ENCODE measurements at regions of chr15 and their contacts with region 1.

Region 1: DNA sequence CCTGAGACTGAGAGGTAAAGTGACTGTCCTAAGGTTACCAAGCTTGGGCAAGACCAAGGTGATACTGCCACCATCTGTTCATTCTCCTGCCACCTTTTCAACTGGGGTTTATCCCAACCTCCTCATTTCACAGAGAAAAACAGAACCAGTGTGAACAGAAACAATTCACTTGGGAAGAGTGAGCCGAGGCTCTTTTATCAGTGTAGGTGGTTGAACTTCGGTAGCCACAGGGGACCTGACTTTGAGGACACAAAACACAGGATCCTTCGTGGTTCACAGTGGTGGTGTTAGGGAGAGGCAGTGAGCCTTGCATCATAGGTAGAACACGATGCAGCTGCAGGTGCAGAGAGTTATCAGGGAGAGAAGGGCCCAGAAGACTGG is 72.8 kb upstream of the ICE2 start:
- DNase-seq: peak in 1 of 2 experiments; percentile 6
- H3K4me3 ChIP-seq: no peak overlapping the region
- H3K27ac ChIP-seq: no peak overlapping the region
- H3K4me1 ChIP-seq: no peaks in the 10 kb centered on the region
- H3K27me3 ChIP-seq: no peaks in the 10 kb centered on the region
- CTCF ChIP-seq: no peak; the same call in 1 of the 2 replicates

Region 2: DNA sequence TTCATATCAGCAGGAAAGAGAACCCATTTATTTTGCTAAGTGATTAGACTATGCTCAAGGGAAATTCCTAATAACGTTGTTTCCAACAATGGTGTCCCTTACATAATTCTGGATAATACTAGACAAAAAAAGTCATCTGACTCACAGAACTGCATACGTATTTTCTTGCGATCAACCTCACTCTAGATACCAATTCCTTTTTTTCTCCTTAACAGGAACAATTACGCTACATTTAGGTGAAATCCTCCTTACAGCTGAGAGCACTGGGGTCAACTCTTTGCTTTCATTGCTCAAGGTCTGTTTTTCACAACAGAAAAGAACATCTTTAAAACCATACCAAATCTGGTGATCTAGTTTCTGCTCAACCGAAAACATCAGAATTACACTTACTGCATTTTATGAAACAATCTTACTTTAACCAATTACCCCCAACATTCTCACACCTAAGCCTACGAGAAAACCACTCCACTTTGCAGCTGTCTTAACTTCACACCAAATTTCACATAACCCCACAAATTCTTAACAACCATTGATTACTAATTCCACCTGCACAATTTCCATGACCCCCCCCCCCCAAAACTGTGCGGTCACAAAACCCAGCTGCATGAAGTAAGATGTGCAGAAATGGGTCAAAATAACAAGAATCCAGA is 11.6 kb before region 1 on chr15:
- CTCF ChIA-PET with region 1: interaction called, 11 read pairs
- POLR2A ChIA-PET with region 1: no interaction called
- intact Hi-C with region 1: no loop called
- DNase-seq: no peak
- H3K4me3 ChIP-seq: no peak overlapping the region
- H3K27ac ChIP-seq: no peak overlapping the region
- H3K4me1 ChIP-seq: no peaks in the 10 kb centered on the region
- H3K27me3 ChIP-seq: no peaks in the 10 kb centered on the region
- CTCF ChIP-seq: no peak

Measured in PC-9 (cell line).